ENCODE measurements at regions of chr6 and their contacts with region 1.

Region 1: DNA sequence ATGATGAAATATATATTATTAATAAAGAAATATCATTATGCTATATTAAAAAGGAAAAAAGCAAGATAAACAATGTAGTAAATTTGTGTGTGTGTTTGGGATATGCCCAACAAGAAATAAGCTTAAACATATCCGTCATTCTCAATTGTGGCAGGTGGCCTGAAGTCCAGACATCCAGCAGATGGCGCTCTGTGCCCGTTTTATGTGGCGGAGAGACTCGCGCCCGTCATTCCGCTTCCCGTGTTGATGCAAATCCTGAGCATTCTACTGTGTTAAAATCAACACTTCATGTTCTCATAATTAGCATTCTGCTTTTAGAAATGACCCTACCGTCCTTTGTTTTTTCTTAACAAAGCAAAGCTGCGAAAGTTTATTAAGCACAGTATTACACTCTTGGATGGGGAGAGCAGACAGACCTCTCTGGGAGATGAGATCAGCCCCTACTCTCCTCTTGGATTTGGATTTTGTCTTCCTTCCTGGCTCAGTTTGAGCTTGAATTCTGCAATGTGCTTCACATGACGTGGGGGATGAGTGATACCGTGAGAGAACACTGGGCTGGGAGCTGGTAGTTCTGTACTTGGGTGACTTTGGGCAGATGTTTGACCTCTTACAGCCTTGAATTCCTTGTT is 125.8 kb downstream of the MCHR2 start:
- DNase-seq: peak in 4 of 5 donors; percentile 45 to 55 (median 49)
- H3K4me3 ChIP-seq: no peak overlapping the region
- H3K4me3 Mint-ChIP-seq: peak overlapping the region in 3 of 8 donors; percentile 4 to 38 (median 9)
- H3K27ac ChIP-seq: no peak overlapping the region
- H3K27ac Mint-ChIP-seq: no peak overlapping the region
- H3K4me1 ChIP-seq: peaks cover 3% of the 10 kb centered on the region
- H3K4me1 Mint-ChIP-seq: peaks cover 0 to 6% (median 3%) of the 10 kb centered on the region in 4 donors
- H3K27me3 ChIP-seq: no peaks in the 10 kb centered on the region
- H3K27me3 Mint-ChIP-seq: peaks cover 7 to 15% of the 10 kb centered on the region in 2 donors

Region 2: GRCh38 chr6:99852031-99852430 is 16.2 kb before region 1 on chr6:
- CTCF ChIA-PET with region 1: interaction called, 31 read pairs
- POLR2A ChIA-PET with region 1: no interaction called
- intact Hi-C with region 1: no loop called
- DNase-seq: no peak
- H3K4me3 ChIP-seq: no peak overlapping the region
- H3K4me3 Mint-ChIP-seq: no peak overlapping the region
- H3K27ac ChIP-seq: no peak overlapping the region
- H3K27ac Mint-ChIP-seq: no peak overlapping the region
- H3K4me1 ChIP-seq: no peaks in the 10 kb centered on the region
- H3K4me1 Mint-ChIP-seq: no peaks in the 10 kb centered on the region
- H3K27me3 ChIP-seq: no peaks in the 10 kb centered on the region
- H3K27me3 Mint-ChIP-seq: peaks cover 20% of the 10 kb centered on the region in 2 donors

Region 3: GRCh38 chr6:99882128-99882702 is 14.0 kb after region 1 on chr6:
- CTCF ChIA-PET with region 1: interaction called, 11 read pairs
- POLR2A ChIA-PET with region 1: no interaction called
- intact Hi-C with region 1: no loop called
- DNase-seq: no peak
- H3K4me3 ChIP-seq: no peak overlapping the region
- H3K4me3 Mint-ChIP-seq: no peak overlapping the region
- H3K27ac ChIP-seq: no peak overlapping the region
- H3K27ac Mint-ChIP-seq: no peak overlapping the region
- H3K4me1 ChIP-seq: no peaks in the 10 kb centered on the region
- H3K4me1 Mint-ChIP-seq: peaks cover 0 to 6% (median 1%) of the 10 kb centered on the region in 4 donors
- H3K27me3 ChIP-seq: no peaks in the 10 kb centered on the region
- H3K27me3 Mint-ChIP-seq: peaks cover 1 to 4% of the 10 kb centered on the region in 2 donors

Region 4: DNA sequence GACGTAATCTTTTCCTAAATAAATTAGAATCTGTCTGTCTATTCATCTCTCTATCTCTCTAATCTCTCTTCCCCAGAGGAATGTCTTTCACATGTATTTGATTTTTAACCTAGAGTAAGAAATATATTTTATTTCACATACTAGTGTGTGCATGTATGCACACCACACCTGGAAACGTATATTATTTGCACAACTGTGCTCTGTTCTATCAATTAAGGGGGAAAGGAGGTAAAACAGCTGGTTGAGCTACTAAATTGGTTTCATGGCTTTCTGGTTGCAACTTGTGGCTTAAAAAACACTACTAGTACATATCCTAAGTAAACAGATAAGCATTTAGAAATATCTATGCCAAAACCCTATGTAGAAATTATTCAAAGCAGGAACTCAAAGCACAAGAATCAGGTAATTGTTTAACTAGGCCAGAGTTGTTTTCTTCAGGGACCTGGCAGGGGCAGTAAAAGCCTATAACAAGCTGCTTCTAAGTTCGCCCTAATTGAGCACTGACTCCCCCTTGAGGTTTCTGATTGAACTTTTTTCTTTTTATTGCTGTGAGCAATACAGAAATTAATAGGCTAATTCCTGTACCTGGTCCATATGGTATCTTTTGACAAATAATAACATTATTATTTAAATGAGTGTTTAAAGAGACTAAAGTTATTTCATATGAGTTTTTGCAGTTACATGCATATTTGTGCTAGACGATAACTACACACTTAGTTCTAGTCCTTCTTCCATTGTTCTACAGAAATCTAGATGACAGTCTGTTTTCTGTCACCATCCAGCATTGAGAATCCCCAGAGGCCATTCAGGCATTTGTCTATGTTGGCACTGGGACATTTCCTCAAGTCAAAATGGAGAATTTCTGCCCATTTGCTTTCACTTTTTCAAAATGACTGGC is 37.3 kb after region 1 on chr6:
- CTCF ChIA-PET with region 1: interaction called, 12 read pairs
- POLR2A ChIA-PET with region 1: no interaction called
- intact Hi-C with region 1: no loop called
- DNase-seq: peak in 3 of 5 donors; percentile 5 to 14 (median 10)
- H3K4me3 ChIP-seq: no peak overlapping the region
- H3K4me3 Mint-ChIP-seq: no peak overlapping the region
- H3K27ac ChIP-seq: no peak overlapping the region
- H3K27ac Mint-ChIP-seq: no peak overlapping the region
- H3K4me1 ChIP-seq: no peaks in the 10 kb centered on the region
- H3K4me1 Mint-ChIP-seq: no peaks in the 10 kb centered on the region
- H3K27me3 ChIP-seq: no peaks in the 10 kb centered on the region
- H3K27me3 Mint-ChIP-seq: peaks cover 2 to 6% of the 10 kb centered on the region in 2 donors

Region 5: DNA sequence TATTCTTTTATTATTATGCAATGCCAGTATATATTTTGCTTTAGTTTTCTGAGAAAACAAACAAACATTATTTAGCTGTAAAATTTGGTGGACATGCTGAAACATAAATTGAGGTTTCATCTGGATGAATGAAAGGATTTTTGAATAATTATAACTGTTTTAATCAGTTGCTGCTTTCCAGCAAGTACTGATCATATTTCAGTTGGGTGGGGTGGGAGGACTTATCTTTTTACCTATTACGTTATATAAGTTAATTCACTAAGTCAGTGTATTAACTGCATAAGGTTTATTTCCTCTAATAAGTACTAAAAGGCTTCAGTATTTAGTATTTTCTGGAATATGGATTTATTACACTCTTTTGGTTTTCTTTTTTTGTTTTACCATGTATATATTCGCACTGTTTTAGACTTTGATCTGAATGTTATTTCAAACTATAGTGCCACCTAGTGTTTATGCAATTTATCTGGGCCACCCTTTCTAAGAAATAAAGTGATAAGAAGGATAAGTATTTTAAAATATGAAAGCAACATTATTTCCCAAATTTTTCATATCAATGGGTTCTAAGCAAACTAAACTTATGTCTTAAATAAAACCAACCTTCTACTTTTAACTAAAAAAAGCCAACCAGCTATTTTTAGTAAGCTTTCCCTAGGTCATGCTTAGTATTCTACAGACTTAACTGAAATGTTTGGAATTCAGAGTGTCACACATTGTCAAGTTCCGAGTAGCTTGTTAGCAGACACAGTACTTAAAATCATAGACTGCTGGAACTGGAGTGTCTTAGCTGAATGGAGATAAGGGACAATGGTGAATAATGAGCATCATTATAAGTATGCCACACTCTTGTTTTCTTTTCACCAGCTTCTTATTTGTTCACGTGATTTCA is 231.2 kb after region 1 on chr6:
- CTCF ChIA-PET with region 1: interaction called, 28 read pairs
- POLR2A ChIA-PET with region 1: no interaction called
- intact Hi-C with region 1: no loop called
- DNase-seq: peak in 1 of 5 donors; percentile 9
- H3K4me3 ChIP-seq: no peak overlapping the region
- H3K4me3 Mint-ChIP-seq: no peak overlapping the region
- H3K27ac ChIP-seq: no peak overlapping the region
- H3K27ac Mint-ChIP-seq: no peak overlapping the region
- H3K4me1 ChIP-seq: no peaks in the 10 kb centered on the region
- H3K4me1 Mint-ChIP-seq: no peaks in the 10 kb centered on the region
- H3K27me3 ChIP-seq: no peaks in the 10 kb centered on the region
- H3K27me3 Mint-ChIP-seq: peaks cover 7% of the 10 kb centered on the region in 2 donors

Region 6: DNA sequence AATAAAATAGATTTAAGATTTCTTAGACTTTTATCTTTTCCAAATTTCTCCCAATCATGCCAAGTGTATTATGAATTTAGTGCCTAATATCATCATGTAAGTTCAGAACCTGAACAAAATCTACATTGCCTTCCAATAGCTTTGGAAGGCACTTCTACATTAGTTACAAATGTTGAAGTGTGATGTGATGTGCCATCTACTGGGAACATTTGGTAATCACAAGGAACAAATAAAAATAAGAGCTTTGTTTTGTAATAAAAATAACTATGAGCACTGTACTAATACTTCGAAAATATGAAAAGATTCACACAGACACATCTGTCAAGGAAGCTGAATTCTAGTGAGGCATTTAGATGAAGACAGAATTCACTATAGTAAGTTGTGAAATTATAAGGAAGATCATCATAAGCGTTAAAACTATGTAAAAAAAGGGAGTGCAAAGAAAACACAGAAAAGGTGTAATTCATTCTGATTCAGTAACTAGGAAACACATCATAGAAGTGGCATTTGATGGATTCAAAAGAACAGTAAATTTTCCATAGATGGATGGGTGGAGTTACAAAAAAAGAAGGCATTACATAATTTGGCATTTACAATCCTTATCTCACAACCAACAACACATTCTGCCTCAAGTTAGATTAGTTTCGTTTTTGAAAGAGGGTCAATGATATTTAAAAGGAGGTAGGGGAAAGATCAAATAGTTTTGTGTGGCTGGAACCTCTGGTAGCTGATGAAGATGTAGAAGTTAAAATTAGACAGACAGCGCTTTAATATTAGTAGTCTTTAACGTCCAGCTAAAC is 851.9 kb after region 1 on chr6:
- CTCF ChIA-PET with region 1: no interaction called
- POLR2A ChIA-PET with region 1: no interaction called
- intact Hi-C with region 1: loop called (anchors 5 kb)
- DNase-seq: peak in 1 of 5 donors; percentile 2
- H3K4me3 ChIP-seq: no peak overlapping the region
- H3K4me3 Mint-ChIP-seq: peak overlapping the region in 6 of 8 donors; percentile 0 to 69 (median 35)
- H3K27ac ChIP-seq: no peak overlapping the region
- H3K27ac Mint-ChIP-seq: peak overlapping the region in 3 of 7 donors; percentile 5 to 24 (median 8)
- H3K4me1 ChIP-seq: no peaks in the 10 kb centered on the region
- H3K4me1 Mint-ChIP-seq: peaks cover 9 to 15% (median 12%) of the 10 kb centered on the region in 4 donors
- H3K27me3 ChIP-seq: no peaks in the 10 kb centered on the region
- H3K27me3 Mint-ChIP-seq: no peaks in the 10 kb centered on the region

Measured in CD4-positive, alpha-beta memory T cell (primary cell).